Adrenal gland (tissue), 19 donors: ENCODE measurements at regions of chr10 and their contacts with region 1.

Region 1: GRCh38 chr10:132387764-132388210 is 9.2 kb upstream of the PWWP2B start:
- DNase-seq: peak; percentile 63 to 84 (median 78)
- H3K4me3 ChIP-seq: no peak overlapping the region
- H3K27ac ChIP-seq: peak overlapping the region in 3 of 5 donors; percentile 12 to 41 (median 21)
- H3K4me1 ChIP-seq: peaks cover 8 to 11% of the 10 kb centered on the region in 2 donors
- H3K27me3 ChIP-seq: no peaks in the 10 kb centered on the region
- CTCF ChIP-seq: peak; percentile 27 to 81 (median 64)
- POLR2A ChIP-seq: no peak

Region 2: DNA sequence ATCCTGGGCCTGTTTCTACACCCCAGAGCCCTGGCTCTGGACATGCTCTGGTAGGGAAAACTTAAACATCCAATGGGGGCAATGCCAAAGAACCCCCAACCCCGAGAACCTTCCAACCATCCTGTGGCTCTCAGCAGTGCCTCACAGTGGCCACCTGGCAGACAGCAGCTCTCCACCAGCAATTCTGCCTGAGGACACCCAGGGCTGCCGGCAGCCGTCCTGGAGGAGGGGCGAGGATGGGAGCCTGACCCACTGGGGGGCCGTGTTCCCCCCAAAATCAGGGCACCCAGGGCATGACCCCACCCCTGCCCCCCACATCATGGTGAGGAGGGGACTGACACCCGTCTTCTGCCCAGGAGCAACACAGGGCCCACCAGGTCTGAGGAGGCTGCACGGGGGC is 168.3 kb before region 1 on chr10:
- intact Hi-C with region 1: no loop called
- DNase-seq: no peak
- H3K4me3 ChIP-seq: no peak overlapping the region
- H3K27ac ChIP-seq: no peak overlapping the region
- H3K4me1 ChIP-seq: no peaks in the 10 kb centered on the region
- H3K27me3 ChIP-seq: no peaks in the 10 kb centered on the region
- CTCF ChIP-seq: no peak
- POLR2A ChIP-seq: no peak

Region 3: GRCh38 chr10:132307823-132308587 is 79.8 kb before region 1 on chr10 and contains the start of gene STK32C:
- intact Hi-C with region 1: no loop called
- DNase-seq: peak; percentile 90 to 95 (median 93)
- H3K4me3 ChIP-seq: peak within 1 kb of the TSS; percentile 15 to 84 (median 60)
- H3K27ac ChIP-seq: peak within 1 kb of the TSS in 4 of 5 donors; percentile 71 to 84 (median 76)
- H3K4me1 ChIP-seq: peaks cover 6 to 19% of the 10 kb centered on the region in 2 donors
- H3K27me3 ChIP-seq: no peaks in the 10 kb centered on the region
- CTCF ChIP-seq: no peak
- POLR2A ChIP-seq: peak; percentile 13 to 45
- total RNA-seq, gene STK32C: 2.8 to 18.0 (median 15.9) TPM

Region 4: DNA sequence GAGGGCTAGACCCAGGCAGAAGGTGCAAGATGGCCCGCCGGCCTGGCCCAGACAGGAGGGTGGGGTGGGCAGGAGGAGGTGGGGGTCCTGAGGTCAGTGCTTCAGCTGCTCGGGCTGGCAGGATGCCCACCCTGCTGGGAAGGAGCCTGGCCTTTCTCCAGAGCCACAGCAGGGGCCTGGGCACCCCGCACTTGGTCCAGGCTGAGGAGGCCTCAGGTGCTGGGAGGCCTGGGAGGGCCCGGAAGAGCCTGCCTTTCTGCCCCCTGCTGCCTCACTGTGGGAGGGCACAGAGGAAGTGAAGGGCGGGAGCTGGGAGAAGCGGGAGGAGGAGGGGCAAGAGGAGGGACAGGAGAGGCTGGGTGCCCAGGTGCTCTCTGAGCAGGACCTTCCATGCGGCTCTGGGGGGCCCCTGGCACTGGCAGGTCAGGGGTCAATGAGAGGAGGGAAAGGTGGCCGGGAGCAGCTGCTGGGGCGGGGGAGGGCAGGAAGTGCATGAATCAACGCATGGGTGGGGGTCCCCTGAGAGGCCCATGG is 58.9 kb after region 1 on chr10:
- intact Hi-C with region 1: loop called (anchors 2 to 5 kb)
- DNase-seq: peak in 6 of 7 donors; percentile 53 to 72 (median 66)
- H3K4me3 ChIP-seq: no peak overlapping the region
- H3K27ac ChIP-seq: peak overlapping the region in 3 of 5 donors; percentile 26 to 90 (median 83)
- H3K4me1 ChIP-seq: peaks cover 22 to 25% of the 10 kb centered on the region in 2 donors
- H3K27me3 ChIP-seq: no peaks in the 10 kb centered on the region
- CTCF ChIP-seq: peak in 5 of 6 experiments; percentile 36 to 73 (median 58)
- POLR2A ChIP-seq: no peak

Region 5: GRCh38 chr10:132452631-132453469 is 65.1 kb after region 1 on chr10:
- intact Hi-C with region 1: loop called in 1 of 2 experiments (anchors 5 kb)
- DNase-seq: peak; percentile 88 to 91 (median 90)
- H3K4me3 ChIP-seq: peak overlapping the region in 1 of 4 donors; percentile 39
- H3K27ac ChIP-seq: peak overlapping the region in 2 of 5 donors; percentile 23 to 63
- H3K4me1 ChIP-seq: peaks cover 22% of the 10 kb centered on the region in 2 donors
- H3K27me3 ChIP-seq: no peaks in the 10 kb centered on the region
- CTCF ChIP-seq: peak; percentile 78 to 99 (median 97)
- POLR2A ChIP-seq: no peak

Region 6: GRCh38 chr10:132637477-132638129 is 249.8 kb after region 1 on chr10:
- intact Hi-C with region 1: loop called (anchors 5 to 10 kb)
- DNase-seq: peak in 4 of 7 donors; percentile 18 to 29 (median 22)
- H3K4me3 ChIP-seq: no peak overlapping the region
- H3K27ac ChIP-seq: peak overlapping the region in 1 of 5 donors; percentile 1
- H3K4me1 ChIP-seq: peaks cover 0 to 28% of the 10 kb centered on the region in 2 donors
- H3K27me3 ChIP-seq: no peaks in the 10 kb centered on the region
- CTCF ChIP-seq: peak; percentile 64 to 94 (median 80)
- POLR2A ChIP-seq: no peak

Region 7: GRCh38 chr10:132643709-132644526 is 256.1 kb after region 1 on chr10:
- intact Hi-C with region 1: loop called (anchors 5 to 10 kb)
- DNase-seq: no peak
- H3K4me3 ChIP-seq: no peak overlapping the region
- H3K27ac ChIP-seq: no peak overlapping the region
- H3K4me1 ChIP-seq: no peaks in the 10 kb centered on the region
- H3K27me3 ChIP-seq: no peaks in the 10 kb centered on the region
- CTCF ChIP-seq: no peak
- POLR2A ChIP-seq: no peak